ENCODE measurements at regions of chr19 and their contacts with region 1.

Region 1: DNA sequence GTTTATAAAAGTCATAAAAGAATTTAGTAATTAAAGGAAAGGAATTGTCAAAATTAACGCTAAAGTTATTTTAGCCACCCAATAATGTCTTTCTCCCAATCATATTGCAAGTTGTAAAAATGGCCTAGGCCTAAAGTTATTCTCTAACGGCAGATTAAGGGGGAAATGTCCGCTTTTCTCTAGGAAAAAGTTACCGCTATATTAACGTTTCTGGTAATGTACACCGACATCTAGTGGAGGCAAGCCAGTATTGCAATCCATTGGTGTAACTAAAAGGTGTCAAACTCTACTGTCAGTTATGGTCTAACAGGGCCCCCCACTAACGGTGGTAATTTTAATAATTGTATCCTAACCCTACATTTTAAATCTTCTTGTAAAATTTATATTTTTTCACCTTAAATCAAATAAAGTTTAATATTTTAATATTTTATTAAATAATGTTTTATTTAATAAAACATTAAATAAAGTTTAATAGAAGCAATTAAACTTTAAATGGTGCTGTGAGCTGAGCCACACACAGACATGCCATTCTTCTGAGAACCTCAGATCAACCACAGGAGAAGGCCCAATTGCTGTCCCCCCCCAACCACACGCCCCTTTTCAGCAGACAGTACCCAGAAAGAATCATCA is 35.9 kb upstream of the ZSCAN5A start:
- DNase-seq: peak; percentile 71
- H3K4me3 ChIP-seq: no peak overlapping the region
- H3K27ac ChIP-seq: no peak overlapping the region
- H3K4me1 ChIP-seq: no peaks in the 10 kb centered on the region
- CTCF ChIP-seq: peak; percentile 93

Region 2: GRCh38 chr19:56066152-56067023 is 284.1 kb before region 1 on chr19:
- CTCF ChIA-PET with region 1: no interaction called
- POLR2A ChIA-PET with region 1: no interaction called
- intact Hi-C with region 1: loop called (anchors 10 kb)
- DNase-seq: peak; percentile 67
- H3K4me3 ChIP-seq: peak overlapping the region; percentile 51
- H3K27ac ChIP-seq: no peak overlapping the region
- H3K4me1 ChIP-seq: peaks cover 9% of the 10 kb centered on the region
- CTCF ChIP-seq: peak; percentile 93

Region 3: DNA sequence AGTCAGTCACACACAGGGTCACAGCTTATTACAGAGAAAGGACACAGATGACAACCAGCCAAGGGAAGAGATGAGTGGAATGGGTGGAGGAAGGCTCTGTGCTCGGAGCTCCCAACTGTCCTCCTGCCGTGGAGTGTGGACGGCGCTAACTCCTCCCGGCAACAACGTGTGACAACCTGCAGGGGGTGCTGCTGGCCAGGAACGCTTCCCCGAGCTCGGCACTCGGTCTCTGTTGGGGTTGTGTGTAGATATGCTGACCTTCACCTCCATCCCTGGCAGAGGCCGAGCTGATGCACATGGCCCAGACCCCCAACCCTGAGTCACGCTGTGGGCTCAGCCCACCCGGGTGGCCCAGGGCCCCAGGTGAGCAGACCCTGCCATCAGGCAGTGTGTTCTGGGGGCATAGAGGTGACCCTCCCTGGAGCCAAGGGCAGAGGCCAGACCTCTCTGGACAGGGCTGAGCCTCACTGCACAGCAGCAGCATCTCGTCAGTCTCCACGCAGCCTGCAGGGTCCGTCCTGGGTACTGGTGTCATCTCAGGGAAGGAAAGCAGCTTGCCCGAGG is 195.3 kb before region 1 on chr19:
- CTCF ChIA-PET with region 1: no interaction called
- POLR2A ChIA-PET with region 1: no interaction called
- intact Hi-C with region 1: no loop called
- DNase-seq: no peak
- H3K4me3 ChIP-seq: no peak overlapping the region
- H3K27ac ChIP-seq: no peak overlapping the region
- H3K4me1 ChIP-seq: no peaks in the 10 kb centered on the region
- CTCF ChIP-seq: peak; percentile 59

Region 4: DNA sequence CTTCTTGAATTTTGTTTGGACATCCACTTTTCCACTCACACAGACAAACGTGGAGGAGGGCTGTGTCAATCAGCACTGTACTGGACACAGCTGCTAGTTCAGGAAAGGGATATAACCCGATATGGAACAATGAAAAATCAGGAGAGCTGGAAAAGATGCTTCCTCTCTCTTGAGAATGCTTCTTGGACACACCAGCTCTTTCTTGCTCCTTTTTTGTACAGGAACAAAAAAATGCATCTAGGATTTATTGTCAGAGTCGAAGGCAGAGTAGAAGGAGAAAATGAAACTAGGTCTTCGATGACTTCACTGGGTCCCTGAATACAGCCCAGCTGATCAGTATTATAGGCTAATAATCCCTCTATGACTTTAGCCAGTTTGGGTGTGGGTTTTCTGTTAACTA is 427.8 kb after region 1 on chr19:
- CTCF ChIA-PET with region 1: no interaction called
- POLR2A ChIA-PET with region 1: no interaction called
- intact Hi-C with region 1: no loop called
- DNase-seq: no peak
- H3K4me3 ChIP-seq: no peak overlapping the region
- H3K27ac ChIP-seq: no peak overlapping the region
- H3K4me1 ChIP-seq: no peaks in the 10 kb centered on the region
- CTCF ChIP-seq: no peak